Activated B cell treated with CpG ODN at 0.5 μM for 24 hours (primary cell): ENCODE measurements at regions of chr19 and their contacts with region 1.

Region 1: DNA sequence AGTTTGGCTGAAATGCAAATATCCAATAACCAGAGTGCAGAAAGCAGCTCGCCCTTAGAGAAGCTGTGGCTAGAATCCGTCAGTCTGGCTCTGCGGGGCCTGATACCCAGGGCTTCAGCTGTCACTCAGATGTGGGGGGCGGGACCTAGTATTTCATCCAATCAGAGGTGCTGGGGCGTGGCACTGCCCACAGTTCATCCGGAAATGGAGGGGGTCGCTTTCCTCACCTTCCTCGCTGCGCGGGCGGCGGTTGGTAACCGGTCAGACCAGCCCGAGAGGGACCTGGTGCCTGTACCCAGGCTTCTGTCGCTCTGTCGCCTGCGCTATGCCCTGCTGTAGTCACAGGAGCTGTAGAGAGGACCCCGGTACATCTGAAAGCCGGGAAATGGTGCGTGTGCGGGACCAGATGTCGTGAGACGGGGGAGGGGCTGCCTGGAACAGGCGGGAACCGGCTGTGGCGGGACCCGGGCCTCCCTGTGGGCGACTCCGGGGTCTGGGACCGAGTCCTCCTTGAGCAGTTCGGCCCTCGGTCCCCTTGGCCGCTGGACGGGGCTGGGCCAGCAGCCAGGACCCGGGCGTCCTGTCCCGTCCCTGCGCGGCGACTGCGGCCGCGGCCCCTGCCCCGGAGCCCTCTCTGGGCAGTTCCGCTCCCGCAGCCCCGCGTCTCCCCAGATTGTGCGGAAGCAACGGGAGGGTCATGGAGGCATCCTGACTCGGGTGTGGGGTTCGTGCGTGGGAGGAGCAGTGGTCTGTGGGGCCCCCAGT is at the start of gene ZNF700:
- DNase-seq: peak; percentile 86
- ATAC-seq: peak; percentile 87
- H3K4me3 Mint-ChIP-seq: peak within 1 kb of the TSS; percentile 99
- H3K27ac Mint-ChIP-seq: peak within 1 kb of the TSS; percentile 98
- H3K4me1 Mint-ChIP-seq: peaks cover 44% of the 10 kb centered on the region
- H3K27me3 Mint-ChIP-seq: no peaks in the 10 kb centered on the region
- CTCF ChIP-seq: no peak
- total RNA-seq, gene ZNF700: 24.5 and 33.1 TPM in 2 replicates

Region 2: DNA sequence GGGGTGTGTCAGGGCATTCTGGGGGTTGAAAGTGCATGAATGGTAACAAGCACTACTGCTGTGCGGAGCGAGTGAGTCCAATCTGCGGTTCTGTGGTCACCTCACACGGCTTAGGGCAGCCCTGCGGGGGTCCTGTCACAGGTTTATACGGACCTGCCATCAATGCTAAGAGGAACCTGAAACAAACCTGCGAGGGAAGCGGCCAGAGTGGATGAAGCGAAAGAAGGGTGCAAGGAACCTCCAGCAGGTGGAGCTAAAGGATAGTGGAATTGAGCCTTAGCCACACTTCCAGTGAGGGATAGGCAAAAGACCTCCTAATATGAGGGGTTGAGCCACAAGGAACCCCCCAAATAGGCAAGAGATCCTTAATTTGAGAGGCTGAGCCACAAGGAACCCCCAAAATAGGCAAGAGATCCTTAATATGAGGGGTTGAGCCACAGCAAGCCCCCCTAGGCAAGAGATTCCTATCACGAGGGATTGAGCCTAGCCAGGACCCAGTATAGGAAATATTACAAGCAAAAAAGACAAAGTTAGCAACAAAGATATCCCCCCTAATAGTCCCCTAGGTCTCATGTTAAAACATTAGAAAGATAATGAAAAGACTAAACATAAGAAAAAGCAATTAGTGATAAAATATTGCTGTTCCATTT is 43.8 kb before region 1 on chr19:
- CTCF ChIA-PET with region 1: interaction called, 4 read pairs
- POLR2A ChIA-PET with region 1: no interaction called
- intact Hi-C with region 1: loop called (anchors 1 kb)
- DNase-seq: peak; percentile 27
- ATAC-seq: peak; percentile 82
- H3K4me3 Mint-ChIP-seq: no peak overlapping the region
- H3K27ac Mint-ChIP-seq: no peak overlapping the region
- H3K4me1 Mint-ChIP-seq: peaks cover 2% of the 10 kb centered on the region
- H3K27me3 Mint-ChIP-seq: no peaks in the 10 kb centered on the region
- CTCF ChIP-seq: no peak

Region 3: DNA sequence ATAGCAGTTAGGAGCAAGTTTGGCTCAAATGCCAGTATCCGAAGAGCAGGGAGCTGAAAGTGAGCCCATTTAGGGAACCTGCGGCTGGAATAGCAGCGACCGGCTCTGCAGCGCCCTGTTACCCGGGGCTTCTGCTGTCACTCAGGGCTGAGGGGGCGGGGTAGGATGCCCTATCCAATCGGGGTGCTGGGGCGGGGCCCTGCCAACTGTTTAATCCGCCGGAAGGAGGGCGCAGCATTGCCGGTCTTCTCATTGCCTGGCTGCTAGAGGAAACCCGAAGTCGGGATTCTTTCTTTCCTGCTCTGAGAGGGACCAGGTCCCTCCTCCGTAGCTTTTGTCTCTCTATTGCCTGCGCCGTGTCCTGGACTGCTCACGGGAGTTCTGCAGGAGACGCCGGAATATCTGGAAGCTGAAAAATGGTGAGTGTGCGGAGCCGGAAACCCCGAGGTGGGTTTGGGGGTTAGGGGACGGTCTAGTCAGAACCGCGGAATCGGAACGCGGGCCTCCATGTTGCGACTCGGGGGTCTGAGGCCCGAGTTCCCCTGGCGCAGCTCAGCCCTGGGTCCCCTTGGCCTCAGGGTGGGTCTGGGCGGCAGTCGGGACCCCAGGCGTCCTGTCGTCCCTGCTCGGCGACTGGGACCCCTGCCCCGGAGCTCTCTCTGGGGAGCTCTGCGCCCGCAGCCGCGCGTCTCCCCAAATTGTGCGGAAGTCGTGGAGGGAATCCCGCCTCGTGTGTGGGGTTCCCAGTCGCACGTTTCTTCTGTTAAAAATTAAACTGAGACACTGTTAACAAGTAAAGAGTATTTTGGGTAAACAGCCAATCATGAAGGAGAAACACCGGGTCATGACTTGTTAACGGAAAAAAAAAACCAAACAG is 62.6 kb after region 1 on chr19:
- CTCF ChIA-PET with region 1: interaction called, 84 read pairs
- POLR2A ChIA-PET with region 1: interaction called, 101 read pairs
- intact Hi-C with region 1: loop called (anchors 1 kb)
- DNase-seq: peak; percentile 85
- ATAC-seq: peak; percentile 96
- H3K4me3 Mint-ChIP-seq: peak overlapping the region; percentile 99
- H3K27ac Mint-ChIP-seq: peak overlapping the region; percentile 97
- H3K4me1 Mint-ChIP-seq: peaks cover 31% of the 10 kb centered on the region
- H3K27me3 Mint-ChIP-seq: no peaks in the 10 kb centered on the region
- CTCF ChIP-seq: no peak

Region 4: DNA sequence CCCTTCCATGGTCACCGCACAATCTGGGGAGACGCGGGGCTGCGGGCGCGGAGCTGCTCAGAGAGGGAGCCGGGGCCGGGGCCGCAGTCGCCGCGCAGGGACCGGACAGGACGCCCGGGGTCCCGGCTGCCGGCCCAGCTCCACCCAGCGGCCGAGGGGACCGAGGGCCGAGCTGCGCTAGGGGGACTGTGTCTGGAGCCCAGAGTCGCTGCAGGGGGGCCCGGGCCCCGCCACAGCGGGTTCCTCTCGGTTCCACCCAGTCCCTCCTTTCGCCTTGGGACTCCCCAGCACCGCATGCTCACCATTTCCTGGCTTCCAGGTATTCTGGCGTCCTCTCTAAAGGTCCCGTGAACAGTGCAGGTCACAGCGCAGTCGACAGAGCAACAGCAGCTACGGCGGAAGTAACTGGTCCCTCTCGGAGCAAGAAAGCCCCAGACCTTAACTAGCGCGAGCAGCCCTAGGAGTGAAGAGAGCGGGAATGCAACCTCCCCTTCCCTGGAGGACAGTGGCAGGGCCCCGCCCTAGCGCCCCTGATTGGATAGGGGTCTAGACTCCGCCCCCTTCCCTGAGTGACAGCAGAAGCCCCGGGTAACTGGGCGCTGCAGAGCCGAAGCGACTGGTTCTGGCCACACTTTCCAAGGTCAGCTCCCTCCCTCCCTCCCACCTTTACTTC is 127.6 kb after region 1 on chr19 and contains the start of gene ZNF878:
- CTCF ChIA-PET with region 1: interaction called, 17 read pairs
- POLR2A ChIA-PET with region 1: interaction called, 4 read pairs
- intact Hi-C with region 1: no loop called
- DNase-seq: peak; percentile 48
- ATAC-seq: peak; percentile 90
- H3K4me3 Mint-ChIP-seq: peak within 1 kb of the TSS; percentile 87
- H3K27ac Mint-ChIP-seq: peak within 1 kb of the TSS; percentile 27
- H3K4me1 Mint-ChIP-seq: peaks cover 12% of the 10 kb centered on the region
- H3K27me3 Mint-ChIP-seq: peaks cover 4% of the 10 kb centered on the region
- CTCF ChIP-seq: no peak
- total RNA-seq, gene ZNF878: 1.2 and 1.6 TPM in 2 replicates

Region 5: DNA sequence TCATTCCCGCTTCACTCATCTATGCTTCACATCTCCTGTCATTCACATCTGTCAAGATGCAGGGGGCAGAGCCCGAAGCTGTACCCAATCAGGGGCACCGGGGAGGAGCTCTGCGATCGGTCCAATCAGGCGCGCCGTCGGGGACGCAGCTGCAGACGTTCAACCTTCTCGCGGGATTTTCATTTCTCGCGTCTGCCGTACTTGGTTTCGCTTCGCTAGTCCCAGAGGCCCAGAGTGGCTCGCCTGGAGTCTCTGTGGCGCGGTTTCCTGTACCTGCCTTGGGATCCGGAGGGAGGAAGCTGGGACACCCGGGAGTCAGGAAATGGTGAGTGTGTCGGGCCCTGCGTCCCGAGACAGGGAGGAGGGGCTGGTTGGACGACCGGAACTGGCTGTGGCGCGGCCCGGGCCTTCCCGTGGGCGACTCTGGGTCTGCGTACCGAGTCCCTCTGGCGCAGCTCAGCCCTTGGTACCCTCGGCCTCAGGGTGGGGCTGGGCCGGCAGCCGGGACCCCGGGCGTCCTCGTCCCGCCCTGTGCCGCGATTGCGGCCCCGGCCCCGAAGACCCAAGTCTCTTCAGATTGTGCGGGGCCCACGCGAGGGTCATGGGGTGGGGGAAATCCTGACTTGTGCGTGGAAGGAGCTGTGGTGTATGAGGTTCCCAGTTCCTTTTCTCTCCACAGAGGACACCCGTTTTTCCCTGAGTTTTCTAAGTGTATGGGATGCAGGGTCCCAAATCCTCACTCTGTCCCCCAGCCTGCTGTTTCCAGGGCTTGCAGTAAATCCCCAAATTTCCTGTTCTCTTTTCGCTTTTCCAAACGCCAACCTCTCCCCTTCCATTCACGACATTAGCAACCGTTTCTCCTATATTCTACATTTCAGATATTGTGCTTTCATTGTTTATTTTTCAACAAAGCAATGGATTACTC is 238.1 kb after region 1 on chr19 and contains the start of gene ZNF136:
- CTCF ChIA-PET with region 1: no interaction called
- POLR2A ChIA-PET with region 1: interaction called, 20 read pairs
- intact Hi-C with region 1: no loop called
- DNase-seq: peak; percentile 83
- ATAC-seq: peak; percentile 99
- H3K4me3 Mint-ChIP-seq: peak within 1 kb of the TSS; percentile 96
- H3K27ac Mint-ChIP-seq: peak within 1 kb of the TSS; percentile 97
- H3K4me1 Mint-ChIP-seq: peaks cover 44% of the 10 kb centered on the region
- H3K27me3 Mint-ChIP-seq: no peaks in the 10 kb centered on the region
- CTCF ChIP-seq: no peak
- total RNA-seq, gene ZNF136: 20.4 and 24.6 TPM in 2 replicates

Region 6: GRCh38 chr19:12666265-12667048 is 741.4 kb after region 1 on chr19 and contains the starts of genes MAN2B1 and WDR83:
- CTCF ChIA-PET with region 1: no interaction called
- POLR2A ChIA-PET with region 1: interaction called, 5 read pairs
- intact Hi-C with region 1: loop called (anchors 2 kb)
- DNase-seq: peak; percentile 83
- ATAC-seq: peak; percentile 70
- H3K4me3 Mint-ChIP-seq: peak within 1 kb of the TSS; percentile 97
- H3K27ac Mint-ChIP-seq: peak within 1 kb of the TSS; percentile 93
- H3K4me1 Mint-ChIP-seq: peaks cover 69% of the 10 kb centered on the region
- H3K27me3 Mint-ChIP-seq: no peaks in the 10 kb centered on the region
- CTCF ChIP-seq: no peak
- total RNA-seq, gene MAN2B1: 251 and 291 TPM in 2 replicates
- total RNA-seq, gene WDR83: 17.7 and 20.8 TPM in 2 replicates